Gastrocnemius medialis (tissue), 4 donors: ENCODE measurements at regions of chr16 and their contacts with region 1.

Region 1: GRCh38 chr16:29815793-29816693 is at the start of gene PAGR1:
- DNase-seq: peak; percentile 98 to 99
- ATAC-seq: peak; percentile 79 to 83
- H3K4me3 ChIP-seq: peak within 1 kb of the TSS; percentile 78 to 96 (median 90)
- H3K27ac ChIP-seq: peak within 1 kb of the TSS; percentile 91 to 99 (median 95)
- H3K4me1 ChIP-seq: peaks cover 44 to 53% of the 10 kb centered on the region in 2 donors
- H3K27me3 ChIP-seq: no peaks in the 10 kb centered on the region
- CTCF ChIP-seq: peak; percentile 95 to 97 (median 95)
- POLR2A ChIP-seq: peak; percentile 66 to 72
- total RNA-seq, gene PAGR1: 15.5 to 29.2 (median 21.7) TPM

Region 2: GRCh38 chr16:29700253-29700987 is 115.6 kb before region 1 on chr16:
- in situ Hi-C with region 1: no loop called
- intact Hi-C with region 1: loop called (anchors 1 kb)
- DNase-seq: peak; percentile 60 to 68
- ATAC-seq: peak; percentile 92 to 95
- H3K4me3 ChIP-seq: no peak overlapping the region
- H3K27ac ChIP-seq: no peak overlapping the region
- H3K4me1 ChIP-seq: no peaks in the 10 kb centered on the region
- H3K27me3 ChIP-seq: no peaks in the 10 kb centered on the region
- CTCF ChIP-seq: peak; percentile 80 to 96 (median 82)
- POLR2A ChIP-seq: no peak

Region 3: DNA sequence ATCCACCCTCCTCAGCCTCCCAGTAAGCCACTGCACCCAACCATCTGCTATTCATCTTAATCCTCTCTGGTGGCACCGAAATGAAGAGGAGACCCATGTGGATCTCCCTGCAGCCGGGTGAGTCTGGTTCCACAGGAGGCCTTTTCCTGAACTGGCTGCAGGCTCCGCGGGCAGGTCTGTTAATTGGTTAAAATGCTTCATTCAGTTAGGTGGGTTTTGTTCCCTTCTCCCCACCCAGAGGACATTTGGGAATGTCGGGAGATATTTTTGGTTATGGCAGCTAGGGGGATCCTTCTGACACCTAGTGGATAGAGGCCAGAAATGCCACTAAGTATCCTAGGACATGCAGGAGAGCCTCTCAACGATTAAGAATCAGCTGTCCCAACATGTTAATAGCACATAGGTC is 86.9 kb before region 1 on chr16:
- in situ Hi-C with region 1: no loop called
- intact Hi-C with region 1: no loop called
- DNase-seq: no peak
- ATAC-seq: peak in 1 of 2 donors; percentile 53
- H3K4me3 ChIP-seq: peak overlapping the region in 1 of 4 donors; percentile 24
- H3K27ac ChIP-seq: no peak overlapping the region
- H3K4me1 ChIP-seq: peaks cover 0 to 5% of the 10 kb centered on the region in 2 donors
- H3K27me3 ChIP-seq: no peaks in the 10 kb centered on the region
- CTCF ChIP-seq: peak in 3 of 5 experiments; percentile 31 to 50 (median 38)
- POLR2A ChIP-seq: no peak

Region 4: GRCh38 chr16:29790183-29790952 is 25.7 kb before region 1 on chr16 and contains the start of gene KIF22:
- in situ Hi-C with region 1: no loop called
- intact Hi-C with region 1: loop called (anchors 1 kb)
- DNase-seq: peak; percentile 99
- ATAC-seq: peak; percentile 96 to 98
- H3K4me3 ChIP-seq: peak within 1 kb of the TSS; percentile 91 to 95 (median 92)
- H3K27ac ChIP-seq: peak within 1 kb of the TSS; percentile 89 to 95 (median 93)
- H3K4me1 ChIP-seq: peaks cover 18 to 24% of the 10 kb centered on the region in 2 donors
- H3K27me3 ChIP-seq: no peaks in the 10 kb centered on the region
- CTCF ChIP-seq: peak; percentile 68 to 89 (median 79)
- POLR2A ChIP-seq: peak; percentile 51 to 60
- total RNA-seq, gene KIF22: 9.0 to 13.9 (median 12.8) TPM

Region 5: DNA sequence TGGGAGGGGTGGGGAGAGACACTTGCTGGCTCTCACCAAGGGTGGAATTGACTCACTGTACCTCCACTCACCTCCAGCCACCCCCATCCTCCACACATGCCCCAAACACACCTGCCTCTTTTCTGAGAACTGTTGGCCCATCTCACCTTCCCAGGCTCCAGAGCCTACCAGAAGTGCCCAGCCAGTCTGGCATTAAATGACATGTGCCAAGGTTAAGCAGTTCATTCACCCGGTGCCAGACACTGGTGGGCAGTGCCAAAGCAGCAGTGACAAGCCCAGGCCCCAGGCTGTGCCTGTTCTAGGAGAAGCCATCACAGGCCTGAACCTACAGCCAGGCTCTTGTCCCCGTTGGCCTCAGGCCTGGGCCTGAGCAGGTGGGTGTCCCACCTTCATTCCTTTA is 15.4 kb after region 1 on chr16:
- in situ Hi-C with region 1: no loop called
- intact Hi-C with region 1: no loop called
- DNase-seq: peak in 1 of 2 donors; percentile 35
- ATAC-seq: peak in 1 of 2 donors; percentile 18
- H3K4me3 ChIP-seq: no peak overlapping the region
- H3K27ac ChIP-seq: no peak overlapping the region
- H3K4me1 ChIP-seq: no peaks in the 10 kb centered on the region
- H3K27me3 ChIP-seq: no peaks in the 10 kb centered on the region
- CTCF ChIP-seq: no peak
- POLR2A ChIP-seq: no peak

Region 6: GRCh38 chr16:29862884-29863668 is 47.0 kb after region 1 on chr16 and contains the start of gene CDIPT:
- in situ Hi-C with region 1: no loop called
- intact Hi-C with region 1: loop called (anchors 1 kb)
- DNase-seq: peak; percentile 92 to 94
- ATAC-seq: peak; percentile 99
- H3K4me3 ChIP-seq: peak within 1 kb of the TSS; percentile 78 to 98 (median 80)
- H3K27ac ChIP-seq: peak within 1 kb of the TSS; percentile 87 to 96 (median 93)
- H3K4me1 ChIP-seq: peaks cover 18 to 20% of the 10 kb centered on the region in 2 donors
- H3K27me3 ChIP-seq: no peaks in the 10 kb centered on the region
- CTCF ChIP-seq: peak; percentile 32 to 64 (median 57)
- POLR2A ChIP-seq: peak; percentile 36 to 41
- total RNA-seq, gene CDIPT: 35.5 to 71.8 (median 55.7) TPM

Region 7: GRCh38 chr16:29973384-29974246 is 157.6 kb after region 1 on chr16 and contains the start of gene TAOK2:
- in situ Hi-C with region 1: no loop called
- intact Hi-C with region 1: loop called (anchors 5 kb)
- DNase-seq: peak; percentile 97 to 99
- ATAC-seq: peak; percentile 91 to 94
- H3K4me3 ChIP-seq: peak within 1 kb of the TSS; percentile 90 to 99 (median 94)
- H3K27ac ChIP-seq: peak within 1 kb of the TSS; percentile 94 to 100 (median 98)
- H3K4me1 ChIP-seq: peaks cover 26 to 28% of the 10 kb centered on the region in 2 donors
- H3K27me3 ChIP-seq: no peaks in the 10 kb centered on the region
- CTCF ChIP-seq: no peak
- POLR2A ChIP-seq: peak; percentile 83 to 86
- total RNA-seq, gene TAOK2: 15.9 to 31.0 (median 22.1) TPM

Region 8: DNA sequence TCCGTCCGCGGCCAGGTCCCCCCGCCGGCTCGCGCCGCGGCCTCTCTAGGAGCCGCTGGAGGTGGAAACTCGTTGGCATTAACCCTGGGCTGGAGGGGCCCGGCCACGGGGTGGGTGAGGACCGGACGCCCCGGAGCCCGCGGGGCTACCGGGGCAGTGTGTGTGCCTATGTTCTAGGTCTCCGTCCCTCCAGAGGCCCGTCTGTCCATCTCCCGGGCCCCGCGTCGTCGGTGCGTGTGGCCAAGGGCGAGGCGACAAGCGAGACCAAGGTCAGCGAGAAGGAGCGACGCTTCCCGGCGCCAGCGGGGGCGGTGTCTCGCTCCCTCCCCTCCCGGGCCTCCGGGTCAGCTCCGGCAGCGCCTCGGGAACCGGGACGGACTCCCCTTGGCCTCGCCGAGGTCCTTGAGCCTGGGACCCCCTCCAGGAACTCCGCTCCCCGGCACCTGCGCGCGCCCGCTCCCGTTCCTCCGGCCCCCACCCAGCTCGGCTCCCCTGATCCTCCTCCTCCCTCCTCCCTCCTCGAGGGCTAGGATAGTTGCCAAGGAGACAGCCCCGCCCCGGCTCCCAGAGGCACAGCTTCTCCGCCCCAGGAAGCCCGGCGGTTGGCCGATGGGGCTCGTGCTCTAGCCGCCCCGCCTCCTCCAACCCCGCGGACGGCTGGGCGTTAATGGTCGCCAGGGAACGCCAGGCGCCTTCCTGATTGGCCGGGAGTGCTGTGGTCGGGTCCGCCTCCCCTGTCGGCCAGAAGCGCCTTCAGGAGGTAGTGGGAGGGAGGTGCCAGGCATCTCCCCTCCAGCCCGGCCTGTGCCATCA is 711.0 kb after region 1 on chr16:
- in situ Hi-C with region 1: no loop called
- intact Hi-C with region 1: loop called (anchors 10 kb)
- DNase-seq: peak; percentile 98
- ATAC-seq: peak; percentile 87 to 91
- H3K4me3 ChIP-seq: peak overlapping the region; percentile 66 to 91 (median 86)
- H3K27ac ChIP-seq: peak overlapping the region; percentile 96 to 100 (median 97)
- H3K4me1 ChIP-seq: peaks cover 19 to 36% of the 10 kb centered on the region in 2 donors
- H3K27me3 ChIP-seq: no peaks in the 10 kb centered on the region
- CTCF ChIP-seq: peak in 4 of 5 experiments; percentile 45 to 62 (median 52)
- POLR2A ChIP-seq: peak; percentile 80 to 88